ENCODE measurements at regions of chr11 and their contacts with region 1.

Region 1: GRCh38 chr11:63738720-63739360 is 29.7 kb downstream of the ZFTA start:
- DNase-seq: peak; percentile 86
- ATAC-seq: peak; percentile 47
- H3K4me3 Mint-ChIP-seq: no peak overlapping the region
- H3K27ac Mint-ChIP-seq: peak overlapping the region; percentile 46
- H3K4me1 Mint-ChIP-seq: peaks cover 6% of the 10 kb centered on the region
- H3K27me3 Mint-ChIP-seq: no peaks in the 10 kb centered on the region
- CTCF ChIP-seq: peak; percentile 99

Region 2: DNA sequence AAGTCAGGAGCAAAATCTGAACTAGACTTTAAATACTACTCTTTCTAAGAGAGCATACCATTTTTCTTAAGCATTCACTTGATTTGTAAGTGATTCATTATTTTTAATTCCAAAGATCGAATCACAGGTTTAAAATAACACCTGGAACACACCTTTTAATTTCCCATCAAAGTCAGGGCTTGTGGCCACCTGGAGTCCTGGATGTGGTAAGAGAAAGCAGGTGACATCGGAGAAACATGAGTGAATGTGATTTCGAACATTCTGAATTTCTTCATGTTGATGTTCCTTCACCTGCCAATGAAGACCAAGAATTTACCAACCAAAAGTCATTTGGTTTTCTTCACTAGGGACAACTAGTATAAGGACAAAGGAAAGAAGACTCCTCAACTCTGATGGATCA is 95.6 kb before region 1 on chr11:
- CTCF ChIA-PET with region 1: interaction called, 17 read pairs
- POLR2A ChIA-PET with region 1: interaction called, 3 read pairs
- intact Hi-C with region 1: no loop called
- DNase-seq: no peak
- ATAC-seq: no peak
- H3K4me3 Mint-ChIP-seq: no peak overlapping the region
- H3K27ac Mint-ChIP-seq: no peak overlapping the region
- H3K4me1 Mint-ChIP-seq: no peaks in the 10 kb centered on the region
- H3K27me3 Mint-ChIP-seq: no peaks in the 10 kb centered on the region
- CTCF ChIP-seq: no peak

Region 3: DNA sequence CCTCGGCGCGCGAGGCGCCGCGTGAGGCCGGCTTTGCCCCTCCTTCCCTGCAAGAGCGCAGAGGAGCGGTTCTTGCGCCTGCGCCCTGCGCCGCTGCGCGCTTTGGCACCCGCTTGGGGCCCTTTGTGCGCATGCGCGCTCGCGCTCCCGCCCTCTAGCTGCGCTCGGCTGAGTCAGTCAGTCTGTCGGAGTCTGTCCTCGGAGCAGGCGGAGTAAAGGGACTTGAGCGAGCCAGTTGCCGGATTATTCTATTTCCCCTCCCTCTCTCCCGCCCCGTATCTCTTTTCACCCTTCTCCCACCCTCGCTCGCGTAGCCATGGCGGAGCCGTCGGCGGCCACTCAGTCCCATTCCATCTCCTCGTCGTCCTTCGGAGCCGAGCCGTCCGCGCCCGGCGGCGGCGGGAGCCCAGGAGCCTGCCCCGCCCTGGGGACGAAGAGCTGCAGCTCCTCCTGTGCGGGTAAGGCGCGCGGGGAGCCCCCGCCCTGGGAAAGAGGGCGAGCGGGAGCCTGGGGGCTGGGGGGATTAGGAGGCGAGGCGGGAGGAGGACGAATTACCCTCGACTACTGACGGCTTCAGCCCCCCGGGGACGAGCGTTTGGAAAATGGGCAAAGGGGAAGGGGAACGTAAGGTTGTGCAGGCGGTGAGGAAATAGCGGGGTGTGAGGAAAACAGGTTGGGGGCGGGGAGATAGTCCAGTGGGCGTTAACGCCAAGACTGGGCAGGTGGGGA is 57.4 kb before region 1 on chr11 and contains the start of gene RTN3:
- CTCF ChIA-PET with region 1: interaction called, 20 read pairs
- POLR2A ChIA-PET with region 1: no interaction called
- intact Hi-C with region 1: no loop called
- DNase-seq: peak; percentile 98
- ATAC-seq: peak; percentile 94
- H3K4me3 Mint-ChIP-seq: peak within 1 kb of the TSS; percentile 90
- H3K27ac Mint-ChIP-seq: peak within 1 kb of the TSS; percentile 81
- H3K4me1 Mint-ChIP-seq: peaks cover 22% of the 10 kb centered on the region
- H3K27me3 Mint-ChIP-seq: no peaks in the 10 kb centered on the region
- CTCF ChIP-seq: no peak
- total RNA-seq, gene RTN3: 32.1 to 34.0 TPM

Region 4: DNA sequence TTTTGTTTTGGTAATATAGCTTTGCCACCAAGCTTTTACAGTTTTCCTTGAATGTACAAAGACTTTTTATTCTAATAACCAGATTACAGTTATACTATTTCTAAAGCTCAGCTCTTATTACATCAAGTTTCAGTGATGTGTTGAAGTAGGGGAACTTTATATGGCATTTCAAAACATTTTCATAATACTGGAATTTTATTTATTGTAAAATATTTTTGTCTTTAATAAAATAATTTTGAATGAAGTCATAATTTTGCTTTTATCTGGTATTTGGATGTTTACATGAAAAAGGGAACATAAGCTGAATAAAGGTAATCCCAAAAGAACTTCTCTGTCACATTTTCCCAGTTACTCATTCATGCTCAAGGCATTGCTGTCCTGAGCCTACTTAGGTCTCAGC is 22.8 kb before region 1 on chr11:
- CTCF ChIA-PET with region 1: interaction called, 11 read pairs
- POLR2A ChIA-PET with region 1: no interaction called
- intact Hi-C with region 1: no loop called
- DNase-seq: no peak
- ATAC-seq: no peak
- H3K4me3 Mint-ChIP-seq: no peak overlapping the region
- H3K27ac Mint-ChIP-seq: no peak overlapping the region
- H3K4me1 Mint-ChIP-seq: peaks cover 2% of the 10 kb centered on the region
- H3K27me3 Mint-ChIP-seq: no peaks in the 10 kb centered on the region
- CTCF ChIP-seq: no peak

Region 5: GRCh38 chr11:63829823-63830489 is 91.1 kb after region 1 on chr11:
- CTCF ChIA-PET with region 1: no interaction called
- POLR2A ChIA-PET with region 1: no interaction called
- intact Hi-C with region 1: no loop called
- DNase-seq: peak; percentile 37
- ATAC-seq: peak; percentile 65
- H3K4me3 Mint-ChIP-seq: no peak overlapping the region
- H3K27ac Mint-ChIP-seq: no peak overlapping the region
- H3K4me1 Mint-ChIP-seq: no peaks in the 10 kb centered on the region
- H3K27me3 Mint-ChIP-seq: no peaks in the 10 kb centered on the region
- CTCF ChIP-seq: peak; percentile 12

Measured in activated CD8-positive, alpha-beta T cell treated with anti-CD3 and anti-CD28 coated beads for 36 hours (primary cell).